ENCODE measurements at regions of chr11 and their contacts with region 1.

Region 1: GRCh38 chr11:29432719-29433325 is 584.0 kb downstream of the KCNA4 start:
- DNase-seq: peak; percentile 11 to 17
- ATAC-seq: peak in 1 of 2 experiments; percentile 64; a peak in 3 of 6 replicates
- H3K4me3 ChIP-seq: no peak overlapping the region
- H3K27ac ChIP-seq: no peak overlapping the region
- H3K4me1 ChIP-seq: no peaks in the 10 kb centered on the region
- CTCF ChIP-seq: peak; percentile 65
- EP300 ChIP-seq: no peak
- POLR2A ChIP-seq: no peak
- RAD21 ChIP-seq: peak; percentile 58 to 68

Region 2: GRCh38 chr11:30196400-30197206 is 763.8 kb after region 1 on chr11:
- CTCF ChIA-PET with region 1: interaction called, 10 read pairs
- POLR2A ChIA-PET with region 1: no interaction called
- DNase-seq: peak; percentile 5 to 53
- ATAC-seq: peak; percentile 76 to 91; a peak in 5 of 6 replicates
- H3K4me3 ChIP-seq: no peak overlapping the region
- H3K27ac ChIP-seq: no peak overlapping the region
- H3K4me1 ChIP-seq: no peaks in the 10 kb centered on the region
- CTCF ChIP-seq: peak; percentile 57
- EP300 ChIP-seq: no peak
- POLR2A ChIP-seq: no peak
- RAD21 ChIP-seq: peak; percentile 52 to 60; a peak in 4 of 5 replicates